Posterior cingulate gyrus (tissue), 11 donors: ENCODE measurements at regions of chr4 and their contacts with region 1.

Region 1: GRCh38 chr4:77156533-77156911 is 485 bp upstream of the CCNG2 start:
- DNase-seq: peak; percentile 92 to 99 (median 96)

Region 2: GRCh38 chr4:77075869-77076799 is 80.4 kb before region 1 on chr4 and contains the start of gene CCNI:
- intact Hi-C with region 1: loop called (anchors 2 kb)
- DNase-seq: peak; percentile 88 to 99 (median 92)

Region 3: DNA sequence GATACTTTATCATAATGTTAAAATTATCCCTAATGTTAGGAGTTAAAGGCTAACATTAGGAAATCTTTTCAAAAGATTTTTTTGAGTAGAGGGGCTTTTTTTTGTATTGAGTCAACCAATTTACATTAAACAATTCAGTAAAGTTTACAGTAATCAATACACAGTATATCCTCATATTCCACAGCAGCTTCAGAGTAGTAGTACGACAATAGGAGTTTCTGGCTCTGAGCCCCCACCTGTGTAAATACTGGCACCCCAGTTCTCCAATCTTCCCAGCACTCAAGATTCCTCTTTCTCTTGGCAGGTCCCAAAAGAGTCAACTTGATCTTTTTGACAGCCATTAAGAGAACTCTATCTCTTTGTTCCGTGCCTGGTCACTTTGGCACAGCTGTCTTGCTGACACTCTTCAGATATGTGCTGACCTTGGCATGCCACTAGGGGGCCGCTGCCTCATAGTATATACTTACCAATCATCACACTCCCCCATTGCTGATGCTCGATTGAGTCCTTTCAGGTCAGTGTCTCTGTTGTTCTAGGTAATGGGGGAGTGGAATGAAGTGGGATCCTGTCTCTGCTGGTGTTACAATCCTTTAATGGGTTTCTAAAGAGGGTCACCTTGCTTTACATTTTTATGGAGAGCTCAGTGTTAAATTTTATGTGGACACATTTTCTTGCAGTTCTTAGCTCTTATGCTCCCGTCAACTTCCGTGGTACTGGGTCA is 61.3 kb before region 1 on chr4:
- intact Hi-C with region 1: loop called (anchors 5 kb)
- DNase-seq: peak; percentile 51 to 97 (median 78)

Region 4: DNA sequence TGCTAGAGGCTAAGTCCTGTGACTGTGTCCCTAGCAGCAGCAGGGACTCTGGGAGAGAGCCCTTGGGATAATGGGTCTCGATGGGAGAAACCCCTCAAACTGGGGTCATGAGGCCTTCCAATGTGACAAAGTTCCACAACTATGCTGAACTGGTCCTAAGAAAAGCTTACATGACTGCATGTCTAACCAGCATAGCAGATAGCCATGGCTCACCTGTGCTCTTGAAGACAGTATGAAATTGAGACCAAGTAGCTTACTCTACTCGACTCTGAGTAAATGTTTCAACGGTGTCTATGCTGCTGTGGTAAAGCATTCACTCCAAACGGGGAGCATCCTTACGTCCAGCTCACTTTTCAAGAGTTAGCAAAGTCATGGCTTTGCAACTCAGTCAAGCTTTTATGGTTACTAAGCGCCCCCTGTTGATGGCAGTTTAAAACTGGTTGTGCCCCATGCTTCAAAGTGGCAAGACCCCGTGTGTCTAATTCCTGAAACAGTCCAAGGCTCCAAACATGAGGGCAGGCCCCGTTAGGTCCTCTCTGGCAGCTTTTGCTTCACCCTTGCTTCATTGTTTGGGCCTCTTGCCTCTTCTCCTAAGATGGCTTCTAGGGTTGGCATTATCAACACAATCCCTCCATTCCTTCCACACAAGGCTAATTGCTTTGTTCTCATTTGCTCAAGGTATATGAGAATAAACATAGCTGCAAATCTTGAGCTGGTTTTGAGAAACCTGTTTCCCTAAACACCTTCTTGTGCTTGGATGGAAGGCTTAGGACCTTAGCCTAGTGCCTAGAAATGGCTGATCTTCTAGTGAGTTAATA is 47.1 kb after region 1 on chr4:
- intact Hi-C with region 1: loop called (anchors 5 kb)
- DNase-seq: peak in 8 of 10 donors; percentile 28 to 90 (median 62)